ENCODE measurements at regions of chr10 and their contacts with region 1.

Region 1: GRCh38 chr10:16809074-16809718 is 8.0 kb downstream of the RSU1 start:
- DNase-seq: peak in 26 of 35 experiments; percentile 7 to 69 (median 28)
- ATAC-seq: peak; percentile 50 to 62 (median 56)
- H3K4me3 ChIP-seq: no peak overlapping the region
- H3K4me3 Mint-ChIP-seq: no peak overlapping the region
- H3K27ac ChIP-seq: no peak overlapping the region
- H3K27ac Mint-ChIP-seq: peak overlapping the region in 1 of 2 donors; percentile 16
- H3K4me1 ChIP-seq: peaks cover 0 to 3% of the 10 kb centered on the region in 2 experiments
- H3K4me1 Mint-ChIP-seq: peaks cover 34 to 37% (median 36%) of the 10 kb centered on the region in 3 donors
- H3K27me3 ChIP-seq: no peaks in the 10 kb centered on the region
- H3K27me3 Mint-ChIP-seq: no peaks in the 10 kb centered on the region

Region 2: DNA sequence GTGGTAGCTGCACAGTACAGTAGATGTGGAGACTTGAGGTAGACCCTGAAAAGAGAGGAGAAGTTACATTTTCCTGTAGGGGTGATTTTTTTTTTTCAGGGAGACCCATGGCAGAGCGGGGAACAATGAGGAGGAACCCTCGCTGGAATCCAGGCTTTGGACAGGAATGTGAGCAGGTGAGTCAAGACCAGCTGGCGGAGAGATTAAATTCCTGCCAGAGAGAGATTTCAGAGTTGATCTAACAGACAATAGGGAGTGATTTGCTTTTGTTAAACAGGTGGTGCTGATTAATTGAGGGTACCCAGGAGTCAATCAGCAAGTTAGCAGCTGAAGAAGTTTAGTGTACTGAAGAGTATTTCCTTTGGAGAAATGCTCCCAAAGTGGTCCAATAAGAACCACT is 907.3 kb before region 1 on chr10:
- CTCF ChIA-PET with region 1: interaction called in 1 of 2 experiments, 10 read pairs
- POLR2A ChIA-PET with region 1: no interaction called
- DNase-seq: no peak
- ATAC-seq: no peak
- H3K4me3 ChIP-seq: no peak overlapping the region
- H3K4me3 Mint-ChIP-seq: no peak overlapping the region
- H3K27ac ChIP-seq: no peak overlapping the region
- H3K27ac Mint-ChIP-seq: no peak overlapping the region
- H3K4me1 ChIP-seq: no peaks in the 10 kb centered on the region
- H3K4me1 Mint-ChIP-seq: no peaks in the 10 kb centered on the region
- H3K27me3 ChIP-seq: no peaks in the 10 kb centered on the region
- H3K27me3 Mint-ChIP-seq: peaks cover 23 to 25% of the 10 kb centered on the region in 2 donors

Region 3: DNA sequence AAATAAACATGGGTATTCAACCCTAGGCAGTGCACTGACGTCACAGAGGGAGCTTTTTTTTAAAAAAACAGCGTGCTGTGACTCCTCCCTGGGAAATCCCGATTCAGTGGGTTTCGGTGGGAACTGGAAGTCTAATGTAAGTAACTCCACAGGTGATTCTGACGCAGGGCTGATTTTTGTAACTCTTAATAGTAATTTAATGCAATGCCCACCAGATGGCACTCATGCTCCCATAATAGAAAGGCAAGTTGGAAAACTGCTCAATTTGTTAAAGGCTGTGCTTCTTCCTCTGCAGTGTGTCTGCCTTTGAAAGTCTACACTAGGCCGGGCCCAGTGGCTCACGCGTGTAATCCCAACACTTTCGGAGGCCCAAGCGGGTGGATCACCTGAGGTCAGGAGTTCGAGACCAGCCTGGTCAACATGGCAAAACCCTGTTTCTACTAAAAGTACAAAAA is 18.9 kb after region 1 on chr10:
- CTCF ChIA-PET with region 1: interaction called in 1 of 2 experiments, 15 read pairs
- POLR2A ChIA-PET with region 1: interaction called in 1 of 2 experiments, 5 read pairs
- DNase-seq: peak; percentile 6 to 88 (median 51)
- ATAC-seq: peak; percentile 81 to 92 (median 92)
- H3K4me3 ChIP-seq: no peak overlapping the region
- H3K4me3 Mint-ChIP-seq: no peak overlapping the region
- H3K27ac ChIP-seq: no peak overlapping the region
- H3K27ac Mint-ChIP-seq: peak overlapping the region; percentile 66 to 77
- H3K4me1 ChIP-seq: peaks cover 0 to 6% of the 10 kb centered on the region in 2 experiments
- H3K4me1 Mint-ChIP-seq: peaks cover 0 to 7% (median 4%) of the 10 kb centered on the region in 3 donors
- H3K27me3 ChIP-seq: no peaks in the 10 kb centered on the region
- H3K27me3 Mint-ChIP-seq: no peaks in the 10 kb centered on the region

Measured in T-cell (primary cell).